ENCODE measurements at regions of chr2 and their contacts with region 1.

Region 1: DNA sequence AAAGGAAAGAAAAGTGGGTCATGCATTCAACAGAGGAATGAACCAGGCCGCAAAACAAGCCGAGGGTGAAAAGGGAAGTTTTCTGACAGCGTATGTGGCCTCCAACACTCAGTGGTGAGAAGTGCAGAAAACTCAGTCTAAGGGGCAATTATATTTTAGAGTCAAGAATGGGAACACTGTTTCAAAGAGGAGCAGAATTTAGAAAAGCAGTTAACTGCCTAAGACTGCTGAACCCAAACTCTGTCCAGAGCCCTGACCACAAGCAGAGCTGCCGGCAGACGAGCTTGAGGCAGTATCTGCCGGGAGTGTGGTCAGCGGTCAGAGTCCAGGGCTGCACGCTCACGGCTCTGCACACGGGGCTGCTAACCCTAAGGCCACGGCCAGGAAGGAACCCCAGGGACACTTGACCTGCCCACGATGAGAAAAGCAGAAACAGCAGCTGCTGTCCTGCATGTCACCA is 347.0 kb upstream of the ID2 start:
- DNase-seq: peak in 2 of 9 experiments; percentile 29 to 41
- ATAC-seq: no peak
- H3K4me3 ChIP-seq: no peak overlapping the region
- H3K4me3 Mint-ChIP-seq: no peak overlapping the region
- H3K27ac ChIP-seq: peak overlapping the region in 1 of 2 experiments; percentile 59
- H3K27ac Mint-ChIP-seq: peak overlapping the region; percentile 82
- H3K4me1 ChIP-seq: peaks cover 12% of the 10 kb centered on the region
- H3K4me1 Mint-ChIP-seq: peaks cover 20% of the 10 kb centered on the region
- H3K27me3 ChIP-seq: no peaks in the 10 kb centered on the region
- H3K27me3 Mint-ChIP-seq: no peaks in the 10 kb centered on the region
- CTCF ChIP-seq: no peak

Region 2: DNA sequence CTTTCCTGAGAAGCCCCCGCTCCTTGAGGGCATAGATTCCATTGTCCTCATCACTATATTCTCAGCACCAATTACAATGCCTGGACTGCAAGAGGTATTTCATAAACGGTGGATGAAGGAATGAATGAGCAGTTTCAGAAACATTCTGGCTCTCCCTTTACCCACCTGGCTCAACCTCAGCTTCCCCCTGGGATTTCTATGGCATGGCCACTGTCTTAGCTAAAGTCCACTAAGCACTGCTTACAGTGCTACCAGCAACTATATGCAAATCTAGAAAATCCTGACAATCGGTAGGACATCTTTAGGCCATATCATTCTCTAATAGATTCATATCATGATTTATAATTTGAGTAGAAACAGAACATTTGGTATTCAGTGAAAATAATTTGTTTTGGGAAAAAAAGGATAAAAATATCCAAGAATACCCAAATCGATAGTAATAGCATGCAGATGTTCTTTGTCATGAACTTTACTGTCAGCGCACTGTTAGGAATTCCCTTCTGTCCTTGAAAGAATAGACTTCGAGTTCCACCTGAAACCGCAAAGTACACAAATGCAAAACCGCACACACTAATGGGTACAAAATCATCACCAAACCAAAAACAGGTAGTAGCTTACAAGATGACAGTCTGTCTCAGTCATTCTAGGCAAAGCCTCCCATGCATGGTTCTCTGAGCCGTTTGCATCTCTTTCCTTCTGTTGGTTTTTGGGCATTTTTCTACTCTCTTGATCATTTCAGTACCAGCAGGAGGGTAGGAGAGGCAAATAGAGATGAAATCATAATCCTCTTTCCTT is 43.3 kb after region 1 on chr2:
- CTCF ChIA-PET with region 1: no interaction called
- POLR2A ChIA-PET with region 1: no interaction called
- intact Hi-C with region 1: loop called in 1 of 2 experiments (anchors 1 kb)
- DNase-seq: no peak
- ATAC-seq: no peak
- H3K4me3 ChIP-seq: no peak overlapping the region
- H3K4me3 Mint-ChIP-seq: no peak overlapping the region
- H3K27ac ChIP-seq: no peak overlapping the region
- H3K27ac Mint-ChIP-seq: no peak overlapping the region
- H3K4me1 ChIP-seq: peaks cover 9% of the 10 kb centered on the region
- H3K4me1 Mint-ChIP-seq: peaks cover 20% of the 10 kb centered on the region
- H3K27me3 ChIP-seq: no peaks in the 10 kb centered on the region
- H3K27me3 Mint-ChIP-seq: no peaks in the 10 kb centered on the region
- CTCF ChIP-seq: no peak

Region 3: GRCh38 chr2:8661736-8662135 is 326.8 kb after region 1 on chr2:
- CTCF ChIA-PET with region 1: no interaction called
- POLR2A ChIA-PET with region 1: no interaction called
- intact Hi-C with region 1: no loop called
- DNase-seq: no peak
- ATAC-seq: no peak
- H3K4me3 ChIP-seq: no peak overlapping the region
- H3K4me3 Mint-ChIP-seq: no peak overlapping the region
- H3K27ac ChIP-seq: no peak overlapping the region
- H3K27ac Mint-ChIP-seq: no peak overlapping the region
- H3K4me1 ChIP-seq: peaks cover 20% of the 10 kb centered on the region
- H3K4me1 Mint-ChIP-seq: peaks cover 31% of the 10 kb centered on the region
- H3K27me3 ChIP-seq: no peaks in the 10 kb centered on the region
- H3K27me3 Mint-ChIP-seq: peaks cover 6% of the 10 kb centered on the region
- CTCF ChIP-seq: no peak

Measured in CD8-positive, alpha-beta T cell (primary cell).